Thyroid gland (tissue), 4 donors: ENCODE measurements at regions of chr9 and their contacts with region 1.

Region 1: DNA sequence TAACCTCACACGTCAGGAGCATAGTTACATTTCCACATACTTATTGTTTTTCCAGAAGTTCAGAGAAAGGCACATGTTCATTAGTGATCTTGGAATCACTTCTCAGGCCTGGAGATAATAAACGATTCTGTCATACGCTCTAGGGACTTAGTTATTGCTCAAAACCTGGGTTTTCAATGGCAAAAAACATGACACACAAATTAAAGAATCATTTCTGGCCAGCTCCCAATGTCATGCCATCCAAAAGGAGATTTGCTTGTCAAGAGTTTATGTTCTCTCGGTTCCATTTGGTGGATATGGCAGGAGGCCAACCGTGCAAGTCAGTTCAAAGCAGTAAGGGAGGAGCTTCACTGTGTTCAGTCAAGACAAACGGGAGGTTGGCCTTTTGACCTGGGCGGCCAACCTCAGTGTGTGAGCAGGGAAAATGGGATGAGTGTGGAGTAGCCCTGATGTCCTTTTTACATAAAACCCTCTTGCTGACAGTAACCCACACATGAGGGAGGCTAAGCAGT is 123.4 kb downstream of the NXNL2 start:
- DNase-seq: peak; percentile 92 to 96
- H3K4me3 ChIP-seq: no peak overlapping the region
- H3K27ac ChIP-seq: peak overlapping the region; percentile 16 to 85 (median 77)
- H3K4me1 ChIP-seq: peaks cover 17 to 21% of the 10 kb centered on the region in 2 donors
- H3K27me3 ChIP-seq: no peaks in the 10 kb centered on the region
- CTCF ChIP-seq: no peak
- POLR2A ChIP-seq: no peak

Region 2: GRCh38 chr9:89000973-89001916 is 342.9 kb after region 1 on chr9:
- intact Hi-C with region 1: loop called (anchors 2 kb)
- DNase-seq: peak; percentile 90 to 96
- H3K4me3 ChIP-seq: no peak overlapping the region
- H3K27ac ChIP-seq: peak overlapping the region in 1 of 3 donors; percentile 60
- H3K4me1 ChIP-seq: peaks cover 8 to 34% of the 10 kb centered on the region in 2 donors
- H3K27me3 ChIP-seq: no peaks in the 10 kb centered on the region
- CTCF ChIP-seq: peak; percentile 48 to 91 (median 87)
- POLR2A ChIP-seq: no peak